GM23248 (cell line): ENCODE measurements at regions of chr1 and their contacts with region 1.

Region 1: DNA sequence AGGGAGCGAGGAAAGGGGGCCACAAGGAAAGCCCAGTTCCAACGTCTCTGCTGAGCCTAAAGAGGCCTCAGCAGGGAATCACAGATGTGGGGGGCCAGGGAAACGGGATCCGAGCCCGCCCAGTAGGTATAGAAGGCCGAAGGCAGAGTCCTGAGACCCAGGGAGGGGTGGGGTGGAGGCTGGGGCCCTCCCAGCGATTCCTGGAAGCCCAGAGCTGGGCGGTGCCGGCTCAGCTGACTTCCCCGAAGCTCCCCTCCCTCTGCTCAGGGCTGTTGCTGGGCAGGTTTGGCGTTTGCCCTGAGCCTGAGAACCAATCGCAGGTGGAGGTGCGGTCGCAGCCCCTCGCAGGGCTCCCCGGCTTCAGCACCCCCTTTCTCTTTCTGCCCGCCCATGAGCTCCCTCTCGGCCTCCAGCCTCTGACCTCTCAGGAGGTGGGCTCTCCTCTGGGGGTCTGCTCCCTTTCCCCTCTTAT is 12.8 kb downstream of the ADAMTSL4 start:
- DNase-seq: peak; percentile 96
- H3K4me3 ChIP-seq: peak overlapping the region; percentile 77
- H3K27ac ChIP-seq: peak overlapping the region; percentile 100
- H3K4me1 ChIP-seq: peaks cover 45% of the 10 kb centered on the region
- H3K27me3 ChIP-seq: no peaks in the 10 kb centered on the region

Region 2: GRCh38 chr1:150813058-150813707 is 251.2 kb after region 1 on chr1:
- in situ Hi-C with region 1: loop called (anchors 10 kb)
- DNase-seq: peak; percentile 85
- H3K4me3 ChIP-seq: no peak overlapping the region
- H3K27ac ChIP-seq: no peak overlapping the region
- H3K4me1 ChIP-seq: peaks cover 25% of the 10 kb centered on the region
- H3K27me3 ChIP-seq: no peaks in the 10 kb centered on the region